ENCODE measurements at regions of chr10 and their contacts with region 1.

Region 1: GRCh38 chr10:24901686-24902399 is 50.6 kb downstream of the PRTFDC1 start:
- DNase-seq: no peak
- H3K4me3 ChIP-seq: no peak overlapping the region
- CTCF ChIP-seq: no peak
- POLR2A ChIP-seq: no peak

Region 2: DNA sequence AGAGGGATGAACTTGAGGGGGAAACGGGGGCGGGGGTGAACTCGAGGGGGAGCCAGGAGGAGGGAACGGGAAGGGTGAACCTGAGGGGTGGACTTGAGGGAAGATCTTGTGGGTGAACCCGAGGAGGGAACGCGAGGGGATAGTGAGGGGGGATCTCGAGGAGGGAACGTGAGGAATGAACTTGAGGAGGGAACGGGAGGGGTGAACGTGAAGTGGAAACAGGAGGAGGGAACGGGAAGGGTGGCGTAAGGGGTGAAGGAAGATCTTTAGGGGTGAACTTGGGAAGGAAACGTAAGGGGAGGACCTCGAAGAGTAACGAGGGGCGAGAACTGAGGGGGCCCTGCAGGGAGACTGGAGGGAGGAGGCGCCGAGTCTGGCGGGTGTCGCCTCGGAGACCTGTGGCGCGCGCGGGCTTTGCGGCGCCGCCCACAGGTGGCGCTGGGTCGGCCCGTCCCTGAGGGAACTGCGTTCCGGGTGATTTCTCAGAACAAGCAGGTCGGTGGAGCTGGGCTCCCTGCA is 1032.8 kb after region 1 on chr10:
- intact Hi-C with region 1: loop called (anchors 5 kb)
- DNase-seq: no peak
- H3K4me3 ChIP-seq: peak overlapping the region; percentile 16
- CTCF ChIP-seq: no peak
- POLR2A ChIP-seq: no peak